OCI-LY7 (cell line): ENCODE measurements at regions of chr13 and their contacts with region 1.

Region 1: DNA sequence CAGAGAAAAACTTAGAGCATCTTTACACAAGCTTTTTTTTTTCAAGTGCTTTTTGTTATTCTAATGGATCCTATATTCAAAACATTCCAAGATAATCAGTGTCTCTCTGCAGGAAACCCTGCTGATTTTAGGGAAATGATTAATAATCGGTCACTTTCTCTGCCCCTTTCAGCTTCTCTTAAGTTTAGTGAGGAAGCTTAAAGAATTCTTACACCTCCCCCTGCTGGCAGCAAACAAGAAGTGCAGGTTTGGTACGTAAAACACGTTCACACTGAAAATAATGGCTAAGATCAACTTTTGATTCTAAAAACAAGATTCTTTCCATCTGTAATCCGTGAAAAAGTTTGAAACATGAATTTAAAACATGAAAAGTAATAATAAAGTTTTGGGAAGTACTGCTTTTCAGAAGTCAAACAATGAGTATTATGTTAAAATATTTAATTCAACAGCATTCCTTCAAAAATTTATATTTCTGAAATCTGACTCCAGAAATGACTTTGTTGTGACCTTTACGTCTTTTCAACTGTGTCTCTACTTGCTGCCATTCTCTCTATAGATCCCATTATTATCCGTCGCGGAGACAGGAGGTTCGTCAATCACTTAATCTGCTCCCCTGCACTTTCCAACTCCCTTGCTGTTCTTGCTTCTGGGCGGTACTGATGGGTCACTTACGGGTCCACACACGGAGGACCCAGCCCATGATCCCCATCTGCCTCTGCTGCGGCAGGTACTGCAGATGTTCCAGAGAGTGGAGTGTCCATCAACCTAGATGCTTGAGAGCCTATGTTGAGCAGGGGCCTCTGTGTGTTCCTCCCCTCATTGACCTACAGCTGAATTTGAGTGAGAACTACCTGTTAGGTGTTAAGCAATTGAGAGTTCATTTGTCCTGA is 203.1 kb upstream of the EDNRB start:
- DNase-seq: peak; percentile 65
- H3K4me3 ChIP-seq: no peak overlapping the region
- H3K27ac ChIP-seq: no peak overlapping the region
- H3K4me1 ChIP-seq: no peaks in the 10 kb centered on the region
- CTCF ChIP-seq: peak; percentile 97

Region 2: GRCh38 chr13:77779552-77780272 is 342.0 kb before region 1 on chr13:
- CTCF ChIA-PET with region 1: no interaction called
- POLR2A ChIA-PET with region 1: no interaction called
- intact Hi-C with region 1: loop called (anchors 2 kb)
- DNase-seq: peak; percentile 59
- H3K4me3 ChIP-seq: no peak overlapping the region
- H3K27ac ChIP-seq: no peak overlapping the region
- H3K4me1 ChIP-seq: no peaks in the 10 kb centered on the region
- CTCF ChIP-seq: peak; percentile 91

Region 3: DNA sequence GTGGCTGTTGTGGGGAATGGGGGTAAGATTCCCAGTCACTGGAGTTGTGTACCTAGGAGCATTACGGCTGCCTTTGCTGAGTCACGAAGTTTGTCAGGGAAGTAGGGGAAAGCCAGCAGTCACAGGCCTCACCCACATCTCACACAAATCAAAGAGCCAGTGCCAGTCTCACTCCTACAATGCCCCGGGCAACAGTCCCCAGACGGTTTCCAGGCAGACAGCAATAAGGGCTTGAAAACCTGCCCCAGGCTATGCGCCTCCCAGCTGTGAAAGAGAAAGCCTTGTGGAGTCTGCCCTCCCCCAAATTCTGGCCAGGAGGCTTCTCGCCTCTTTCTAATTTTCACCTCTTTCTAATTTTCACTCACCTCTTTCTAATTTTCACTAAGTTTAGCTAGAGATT is 60.7 kb before region 1 on chr13:
- CTCF ChIA-PET with region 1: no interaction called
- POLR2A ChIA-PET with region 1: no interaction called
- intact Hi-C with region 1: no loop called
- DNase-seq: no peak
- H3K4me3 ChIP-seq: no peak overlapping the region
- H3K27ac ChIP-seq: no peak overlapping the region
- H3K4me1 ChIP-seq: no peaks in the 10 kb centered on the region
- CTCF ChIP-seq: no peak

Region 4: GRCh38 chr13:78160793-78161192 is 39.1 kb after region 1 on chr13:
- CTCF ChIA-PET with region 1: no interaction called
- POLR2A ChIA-PET with region 1: no interaction called
- intact Hi-C with region 1: no loop called
- DNase-seq: no peak
- H3K4me3 ChIP-seq: no peak overlapping the region
- H3K27ac ChIP-seq: no peak overlapping the region
- H3K4me1 ChIP-seq: no peaks in the 10 kb centered on the region
- CTCF ChIP-seq: no peak